Activated CD4-positive, alpha-beta T cell treated with anti-CD3 and anti-CD28 coated beads, Interleukin-2, amount 10 ng/mL, durations not matched to agents 7 days and 5 days (primary cell): ENCODE measurements at regions of chr7 and their contacts with region 1.

Region 1: DNA sequence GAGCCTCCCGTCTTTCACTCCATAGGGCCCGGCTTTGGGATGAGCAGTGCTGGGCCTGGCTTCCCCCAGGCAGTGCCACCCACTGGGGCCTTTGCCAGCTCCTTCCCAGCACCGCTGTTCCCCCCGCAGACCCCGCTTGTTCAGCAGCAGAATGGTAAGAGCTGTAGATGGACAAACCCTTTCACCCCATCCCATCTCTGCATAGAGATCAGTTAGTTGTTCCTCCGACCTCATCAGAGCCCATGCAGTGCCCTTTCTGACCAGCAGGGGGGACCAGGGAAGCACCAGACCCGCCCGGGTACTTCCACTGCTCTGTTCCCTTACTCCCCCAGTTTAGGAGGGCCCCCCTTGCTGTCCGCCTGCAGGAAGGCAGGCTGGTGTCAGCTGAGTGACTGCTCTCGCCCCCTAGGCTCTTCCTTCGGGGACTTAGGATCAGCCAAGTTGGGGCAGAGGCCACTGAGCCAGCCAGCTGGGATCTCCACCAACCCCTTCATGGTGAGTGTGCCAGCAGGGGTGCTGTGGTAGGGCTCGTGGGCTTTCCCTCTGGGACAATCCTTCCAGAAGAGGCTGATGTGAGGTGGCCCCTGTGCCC is 9.8 kb downstream of the SAP25 start:
- DNase-seq: peak; percentile 88
- H3K4me3 Mint-ChIP-seq: no peak overlapping the region
- H3K27ac Mint-ChIP-seq: peak overlapping the region; percentile 3
- H3K4me1 Mint-ChIP-seq: peaks cover 34% of the 10 kb centered on the region
- H3K27me3 Mint-ChIP-seq: no peaks in the 10 kb centered on the region

Region 2: DNA sequence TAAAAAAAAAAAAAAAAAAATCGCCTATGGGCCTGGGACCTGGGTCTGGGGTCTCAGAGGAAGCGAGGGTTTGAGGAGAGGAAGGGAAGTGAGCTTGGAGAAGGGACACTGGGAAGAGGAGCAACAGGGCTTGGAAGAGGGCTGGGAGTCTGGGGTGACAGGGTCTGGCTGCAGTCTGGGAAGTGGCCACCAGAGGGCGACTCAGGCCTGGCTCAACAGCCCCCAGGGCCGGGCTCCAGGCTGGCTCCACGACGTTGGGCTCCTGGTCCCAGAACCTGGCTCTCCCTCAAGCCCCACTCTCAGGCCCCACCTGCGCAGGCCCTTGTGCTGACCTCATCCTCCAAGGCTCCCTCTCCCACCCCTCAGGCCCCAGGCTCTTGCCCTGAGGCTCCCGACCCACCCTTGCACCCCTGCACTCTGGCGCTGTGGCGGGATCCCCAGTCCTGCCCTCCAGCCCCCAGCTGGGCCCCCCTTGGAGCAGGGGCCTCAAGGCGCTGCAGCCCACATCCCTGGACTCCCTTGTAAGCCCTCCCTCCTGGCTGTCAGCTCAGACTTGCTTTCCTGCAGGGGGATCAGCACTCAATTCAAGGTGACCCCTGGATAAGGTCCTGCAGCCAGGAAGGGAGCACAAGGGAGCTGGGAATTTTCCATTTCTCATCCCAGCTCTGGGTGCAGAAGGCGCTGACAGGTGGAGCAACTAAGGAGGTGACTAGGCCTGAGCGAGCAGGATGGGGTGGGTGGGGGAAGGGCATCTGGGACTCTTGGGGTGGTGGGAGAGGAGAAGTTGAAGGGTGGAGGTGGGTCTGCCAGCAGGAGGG is 94.5 kb before region 1 on chr7:
- CTCF ChIA-PET with region 1: interaction called, 14 read pairs
- POLR2A ChIA-PET with region 1: no interaction called
- DNase-seq: peak; percentile 81
- H3K4me3 Mint-ChIP-seq: no peak overlapping the region
- H3K27ac Mint-ChIP-seq: peak overlapping the region; percentile 50
- H3K4me1 Mint-ChIP-seq: peaks cover 28% of the 10 kb centered on the region
- H3K27me3 Mint-ChIP-seq: no peaks in the 10 kb centered on the region

Region 3: GRCh38 chr7:100478966-100479665 is 84.8 kb before region 1 on chr7 and contains the start of gene TSC22D4:
- CTCF ChIA-PET with region 1: interaction called, 17 read pairs
- POLR2A ChIA-PET with region 1: no interaction called
- DNase-seq: peak; percentile 94
- H3K4me3 Mint-ChIP-seq: peak within 1 kb of the TSS; percentile 98
- H3K27ac Mint-ChIP-seq: peak within 1 kb of the TSS; percentile 93
- H3K4me1 Mint-ChIP-seq: peaks cover 44% of the 10 kb centered on the region
- H3K27me3 Mint-ChIP-seq: no peaks in the 10 kb centered on the region
- total RNA-seq, gene TSC22D4: 113 to 128 TPM

Region 4: GRCh38 chr7:100538654-100539435 is 25.1 kb before region 1 on chr7 and contains the start of gene AGFG2:
- CTCF ChIA-PET with region 1: interaction called, 49 read pairs
- POLR2A ChIA-PET with region 1: no interaction called
- DNase-seq: peak; percentile 100
- H3K4me3 Mint-ChIP-seq: peak within 1 kb of the TSS; percentile 99
- H3K27ac Mint-ChIP-seq: peak within 1 kb of the TSS; percentile 83
- H3K4me1 Mint-ChIP-seq: peaks cover 48% of the 10 kb centered on the region
- H3K27me3 Mint-ChIP-seq: no peaks in the 10 kb centered on the region
- total RNA-seq, gene AGFG2: 43.0 to 45.3 TPM

Region 5: GRCh38 chr7:100545360-100546128 is 18.4 kb before region 1 on chr7:
- CTCF ChIA-PET with region 1: interaction called, 49 read pairs
- POLR2A ChIA-PET with region 1: no interaction called
- DNase-seq: no peak
- H3K4me3 Mint-ChIP-seq: peak overlapping the region; percentile 48
- H3K27ac Mint-ChIP-seq: peak overlapping the region; percentile 87
- H3K4me1 Mint-ChIP-seq: peaks cover 95% of the 10 kb centered on the region
- H3K27me3 Mint-ChIP-seq: no peaks in the 10 kb centered on the region

Region 6: DNA sequence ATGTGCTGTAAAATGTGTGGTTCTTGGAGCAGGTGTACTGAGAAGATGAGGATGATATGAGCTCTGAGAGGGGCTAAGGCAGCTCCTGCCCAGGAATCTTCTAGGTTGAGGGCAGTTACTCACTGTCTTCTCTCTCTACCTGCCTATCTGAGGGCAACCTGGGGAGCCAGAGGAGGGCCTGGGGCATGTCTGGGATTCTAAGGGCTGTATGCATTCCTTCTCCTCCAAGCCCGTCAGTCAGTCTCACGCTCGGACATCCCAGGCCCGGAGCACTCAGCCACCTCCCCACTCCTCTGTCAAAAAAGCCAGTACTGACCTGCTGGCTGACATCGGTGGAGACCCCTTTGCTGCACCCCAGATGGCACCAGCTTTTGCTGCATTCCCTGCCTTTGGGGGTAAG is 10.0 kb before region 1 on chr7:
- CTCF ChIA-PET with region 1: interaction called, 49 read pairs
- POLR2A ChIA-PET with region 1: no interaction called
- DNase-seq: no peak
- H3K4me3 Mint-ChIP-seq: no peak overlapping the region
- H3K27ac Mint-ChIP-seq: no peak overlapping the region
- H3K4me1 Mint-ChIP-seq: peaks cover 28% of the 10 kb centered on the region
- H3K27me3 Mint-ChIP-seq: no peaks in the 10 kb centered on the region

Region 7: GRCh38 chr7:100586266-100587025 is 22.5 kb after region 1 on chr7 and contains the start of gene FBXO24:
- CTCF ChIA-PET with region 1: interaction called, 22 read pairs
- POLR2A ChIA-PET with region 1: no interaction called
- DNase-seq: peak; percentile 100
- H3K4me3 Mint-ChIP-seq: peak within 1 kb of the TSS; percentile 92
- H3K27ac Mint-ChIP-seq: peak within 1 kb of the TSS; percentile 92
- H3K4me1 Mint-ChIP-seq: peaks cover 27% of the 10 kb centered on the region
- H3K27me3 Mint-ChIP-seq: peaks cover 5% of the 10 kb centered on the region
- total RNA-seq, gene FBXO24: 1.3 to 1.5 TPM